OCI-LY7 (cell line): ENCODE measurements at regions of chr1 and their contacts with region 1.

Region 1: GRCh38 chr1:204506961-204507387 is 9.2 kb upstream of the MDM4 start:
- DNase-seq: peak; percentile 93
- H3K4me3 ChIP-seq: peak overlapping the region; percentile 72
- H3K27ac ChIP-seq: peak overlapping the region; percentile 96
- H3K4me1 ChIP-seq: peaks cover 66% of the 10 kb centered on the region
- CTCF ChIP-seq: no peak

Region 2: DNA sequence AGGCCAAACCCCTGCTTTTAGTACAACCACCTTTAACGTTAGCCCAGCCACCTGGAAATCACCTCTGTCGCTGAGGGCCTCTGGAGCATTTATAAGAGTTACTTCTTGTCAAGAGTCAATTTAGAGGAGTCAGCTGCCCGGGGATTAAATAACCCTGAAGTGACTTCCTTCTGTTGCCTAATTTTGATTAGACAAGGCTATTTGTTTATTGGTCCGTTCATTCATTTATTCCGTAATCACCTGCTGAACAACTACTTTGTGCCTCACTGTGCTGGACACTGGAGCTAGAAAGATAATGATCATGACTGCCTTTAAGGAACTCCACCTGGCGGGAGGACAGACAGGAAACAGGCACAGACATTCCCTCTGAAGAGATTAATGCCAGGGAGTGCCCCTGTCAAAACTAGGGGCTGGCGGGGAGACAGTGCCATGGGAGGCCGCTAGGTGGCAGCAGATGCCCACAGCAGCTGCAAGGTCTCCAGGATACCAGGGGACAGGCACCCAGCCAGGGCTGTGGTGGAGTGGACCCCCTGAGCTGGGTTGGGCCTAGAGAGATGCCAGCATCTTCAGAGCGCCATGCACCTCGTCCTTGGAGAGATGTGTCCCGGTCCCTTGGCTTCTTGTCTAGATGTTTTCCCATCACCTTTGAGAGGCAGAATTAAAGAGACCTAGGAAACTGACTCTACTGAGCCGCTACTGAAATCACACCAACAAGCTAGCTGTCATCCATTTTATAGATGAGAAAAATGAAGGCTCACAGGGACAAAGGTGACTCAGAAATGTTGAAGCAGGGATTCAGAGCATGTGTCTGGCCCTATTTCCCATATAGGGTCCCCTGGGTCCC is 344.5 kb before region 1 on chr1:
- CTCF ChIA-PET with region 1: no interaction called
- POLR2A ChIA-PET with region 1: interaction called, 3 read pairs
- intact Hi-C with region 1: loop called (anchors 5 kb)
- DNase-seq: peak; percentile 64
- H3K4me3 ChIP-seq: no peak overlapping the region
- H3K27ac ChIP-seq: no peak overlapping the region
- H3K4me1 ChIP-seq: no peaks in the 10 kb centered on the region
- CTCF ChIP-seq: peak; percentile 98

Region 3: GRCh38 chr1:204188982-204189646 is 317.9 kb before region 1 on chr1:
- CTCF ChIA-PET with region 1: no interaction called
- POLR2A ChIA-PET with region 1: no interaction called
- intact Hi-C with region 1: no loop called
- DNase-seq: no peak
- H3K4me3 ChIP-seq: no peak overlapping the region
- H3K27ac ChIP-seq: no peak overlapping the region
- H3K4me1 ChIP-seq: no peaks in the 10 kb centered on the region
- CTCF ChIP-seq: no peak

Region 4: GRCh38 chr1:204411451-204412204 is 95.3 kb before region 1 on chr1 and contains the start of gene PPP1R15B:
- CTCF ChIA-PET with region 1: no interaction called
- POLR2A ChIA-PET with region 1: interaction called, 4 read pairs
- intact Hi-C with region 1: loop called (anchors 2 kb)
- DNase-seq: peak; percentile 99
- H3K4me3 ChIP-seq: peak within 1 kb of the TSS; percentile 98
- H3K27ac ChIP-seq: peak within 1 kb of the TSS; percentile 79
- H3K4me1 ChIP-seq: peaks cover 19% of the 10 kb centered on the region
- CTCF ChIP-seq: no peak
- total RNA-seq, gene PPP1R15B: 63.5 and 72.6 TPM in 2 replicates

Region 5: DNA sequence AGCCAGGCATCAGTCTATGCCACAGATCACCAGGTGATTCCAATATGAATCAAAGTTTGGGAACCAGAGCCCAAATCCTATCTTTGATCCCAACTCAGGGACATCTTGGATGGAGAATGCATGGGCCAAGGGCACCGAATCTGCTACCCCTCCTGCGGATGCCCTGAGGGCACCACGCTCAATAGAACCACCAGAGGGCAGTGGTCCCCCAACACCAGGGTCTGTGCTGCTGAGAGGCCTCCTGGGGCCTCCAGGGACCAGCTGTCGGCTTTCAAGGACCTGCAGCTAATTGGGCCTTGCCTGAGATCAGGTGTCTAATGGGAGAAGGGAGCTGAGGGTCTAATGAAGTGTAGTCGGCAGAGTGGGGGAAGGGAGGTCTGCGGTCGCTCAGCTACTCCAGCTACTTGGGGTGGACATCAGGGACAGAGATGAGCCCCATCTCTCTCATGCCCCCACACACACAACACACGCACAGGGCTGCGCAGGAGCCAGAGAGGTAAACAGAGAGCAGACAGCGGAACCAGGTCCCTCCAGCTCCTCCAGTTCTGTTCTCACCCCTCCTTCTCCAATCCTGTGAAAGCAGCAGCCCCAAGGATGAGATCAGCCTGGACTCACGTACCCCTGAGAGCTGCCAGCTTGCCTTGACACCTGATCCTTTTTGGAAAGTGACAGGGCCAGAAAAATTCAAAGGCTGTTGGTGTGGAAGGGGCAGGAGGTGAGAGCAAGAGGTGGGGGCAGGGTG is 60.4 kb before region 1 on chr1:
- CTCF ChIA-PET with region 1: interaction called, 17 read pairs
- POLR2A ChIA-PET with region 1: interaction called, 6 read pairs
- intact Hi-C with region 1: loop called (anchors 1 kb)
- DNase-seq: peak; percentile 88
- H3K4me3 ChIP-seq: no peak overlapping the region
- H3K27ac ChIP-seq: no peak overlapping the region
- H3K4me1 ChIP-seq: peaks cover 30% of the 10 kb centered on the region
- CTCF ChIP-seq: peak; percentile 83

Region 6: DNA sequence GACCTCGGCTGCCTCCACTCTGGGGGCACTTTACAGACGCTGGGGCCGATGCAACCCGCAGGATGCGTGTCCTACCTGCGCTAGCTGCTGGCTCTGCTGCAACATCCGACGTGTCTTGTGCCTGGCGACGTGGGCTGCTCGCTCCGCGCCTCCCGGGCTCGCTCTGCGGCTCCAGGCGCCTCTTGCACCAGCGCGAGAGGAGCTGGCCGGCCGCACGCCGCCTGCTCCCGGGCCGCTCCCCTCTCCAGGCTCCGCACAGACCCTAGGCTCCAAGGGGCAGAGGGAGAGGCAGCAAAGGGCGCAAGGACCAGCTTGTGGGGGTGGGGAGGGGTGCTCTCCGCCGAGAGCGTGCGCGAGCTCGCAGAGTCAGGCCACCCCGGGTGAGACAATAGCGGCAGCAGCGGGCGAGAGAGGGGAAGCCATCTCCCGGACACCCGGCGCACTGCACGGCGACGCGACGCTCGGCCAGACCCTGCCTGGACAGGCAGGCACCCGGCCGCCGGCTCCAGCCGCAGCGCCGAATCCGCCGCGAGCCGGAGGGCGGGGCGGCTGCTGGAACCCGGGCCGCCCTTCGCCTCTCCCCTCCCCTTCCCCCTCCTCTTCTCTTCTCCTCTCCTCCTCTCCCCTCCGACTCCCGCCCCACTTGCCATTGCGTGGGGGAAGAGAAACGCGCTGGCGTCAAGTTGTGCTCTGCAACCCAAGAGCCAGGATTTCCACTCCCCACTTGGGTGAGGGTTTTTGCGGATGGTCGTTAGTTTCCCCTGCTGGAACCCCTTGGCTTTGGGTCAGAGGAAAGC is 12.5 kb before region 1 on chr1 and contains the start of gene PIK3C2B:
- CTCF ChIA-PET with region 1: interaction called, 4 read pairs
- POLR2A ChIA-PET with region 1: interaction called, 29 read pairs
- intact Hi-C with region 1: no loop called
- DNase-seq: peak; percentile 84
- H3K4me3 ChIP-seq: peak within 1 kb of the TSS; percentile 79
- H3K27ac ChIP-seq: peak within 1 kb of the TSS; percentile 48
- H3K4me1 ChIP-seq: peaks cover 63% of the 10 kb centered on the region
- CTCF ChIP-seq: peak; percentile 56
- total RNA-seq, gene PIK3C2B: 11.9 and 12.5 TPM in 2 replicates

Region 7: DNA sequence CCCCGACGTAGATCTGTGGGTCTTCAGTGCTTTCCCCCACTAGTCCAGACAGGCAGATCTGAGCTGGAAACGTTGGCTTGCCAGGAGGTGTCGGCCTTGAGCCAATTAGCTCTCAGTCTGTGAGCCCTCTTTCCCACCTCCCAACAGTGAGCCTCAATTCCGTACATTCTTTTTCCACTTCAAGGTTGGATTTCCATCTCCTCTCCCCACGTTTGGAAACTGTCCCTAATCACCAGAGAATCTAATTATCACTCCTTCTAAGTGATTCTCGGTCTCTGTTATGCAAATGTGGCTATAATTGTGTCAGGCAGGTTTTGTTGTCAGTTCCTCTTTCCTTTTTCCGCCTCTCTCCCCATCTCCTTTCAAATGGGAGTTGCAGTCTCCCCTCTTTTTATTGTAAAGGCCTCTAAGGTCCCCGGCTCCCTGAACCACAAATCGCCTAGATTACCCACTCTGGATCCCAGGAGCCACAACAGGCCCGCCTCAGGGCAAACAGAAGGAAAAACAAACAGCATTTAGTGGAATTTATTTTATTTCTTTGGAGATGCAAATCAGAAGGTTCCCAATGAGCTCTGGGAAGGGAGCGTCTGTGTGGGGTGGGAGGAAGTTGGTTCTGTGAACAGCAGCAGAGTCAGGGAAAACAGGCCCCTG is 208.0 kb after region 1 on chr1:
- CTCF ChIA-PET with region 1: no interaction called
- POLR2A ChIA-PET with region 1: interaction called, 6 read pairs
- intact Hi-C with region 1: loop called (anchors 10 kb)
- DNase-seq: peak; percentile 65
- H3K4me3 ChIP-seq: peak overlapping the region; percentile 62
- H3K27ac ChIP-seq: peak overlapping the region; percentile 62
- H3K4me1 ChIP-seq: peaks cover 72% of the 10 kb centered on the region
- CTCF ChIP-seq: peak; percentile 73

Region 8: GRCh38 chr1:204806943-204807687 is 300.1 kb after region 1 on chr1:
- CTCF ChIA-PET with region 1: interaction called, 5 read pairs
- POLR2A ChIA-PET with region 1: interaction called, 3 read pairs
- intact Hi-C with region 1: loop called (anchors 1 kb)
- DNase-seq: peak; percentile 91
- H3K4me3 ChIP-seq: peak overlapping the region; percentile 70
- H3K27ac ChIP-seq: no peak overlapping the region
- H3K4me1 ChIP-seq: peaks cover 27% of the 10 kb centered on the region
- CTCF ChIP-seq: peak; percentile 100